ENCODE measurements at regions of chr15 and their contacts with region 1.

Region 1: DNA sequence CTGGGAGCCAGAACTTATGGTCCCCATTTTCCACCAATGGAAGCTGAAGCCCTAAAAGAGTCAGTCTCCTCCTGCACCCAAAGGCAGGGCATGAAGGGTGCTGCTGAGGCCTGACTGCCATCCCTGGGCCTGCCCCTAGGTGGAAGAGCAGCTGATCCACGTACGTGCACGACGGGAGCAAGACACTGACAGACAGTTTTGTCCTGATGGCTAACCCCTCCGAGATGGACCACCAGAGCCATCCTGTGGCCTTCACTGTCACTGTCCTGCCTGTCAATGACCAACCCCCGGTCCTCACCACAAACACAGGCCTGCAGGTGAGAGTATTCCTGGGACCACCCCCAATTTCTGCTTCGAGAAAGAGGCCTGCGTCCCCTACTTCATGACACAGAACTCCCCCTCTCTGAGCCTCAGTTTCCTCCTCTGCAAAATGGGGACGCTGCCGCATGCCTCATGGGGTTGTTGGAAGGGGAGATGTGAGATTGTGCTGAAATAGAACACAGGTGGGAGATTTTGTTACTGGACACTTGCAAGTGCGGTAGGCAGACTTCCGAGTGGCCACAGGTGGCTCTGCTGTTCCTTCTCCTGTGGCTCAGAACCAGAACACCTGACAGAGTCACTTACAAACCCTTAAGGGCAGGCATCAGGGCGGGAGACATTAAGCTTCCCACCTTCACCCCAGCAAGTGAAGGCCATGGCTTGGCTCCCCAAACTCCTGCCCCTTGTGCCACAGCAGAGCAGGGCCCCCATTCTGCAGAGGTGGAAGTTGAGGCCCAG is 175.3 kb downstream of the TBC1D2B start:
- DNase-seq: no peak
- ATAC-seq: peak; percentile 63
- H3K4me3 ChIP-seq: no peak overlapping the region
- H3K27ac ChIP-seq: no peak overlapping the region
- H3K4me1 ChIP-seq: no peaks in the 10 kb centered on the region
- H3K27me3 ChIP-seq: no peaks in the 10 kb centered on the region
- CTCF ChIP-seq: peak; percentile 15 to 42 (median 16); a peak in 2 of 6 replicates
- EP300 ChIP-seq: no peak
- POLR2A ChIP-seq: no peak
- RAD21 ChIP-seq: no peak

Region 2: DNA sequence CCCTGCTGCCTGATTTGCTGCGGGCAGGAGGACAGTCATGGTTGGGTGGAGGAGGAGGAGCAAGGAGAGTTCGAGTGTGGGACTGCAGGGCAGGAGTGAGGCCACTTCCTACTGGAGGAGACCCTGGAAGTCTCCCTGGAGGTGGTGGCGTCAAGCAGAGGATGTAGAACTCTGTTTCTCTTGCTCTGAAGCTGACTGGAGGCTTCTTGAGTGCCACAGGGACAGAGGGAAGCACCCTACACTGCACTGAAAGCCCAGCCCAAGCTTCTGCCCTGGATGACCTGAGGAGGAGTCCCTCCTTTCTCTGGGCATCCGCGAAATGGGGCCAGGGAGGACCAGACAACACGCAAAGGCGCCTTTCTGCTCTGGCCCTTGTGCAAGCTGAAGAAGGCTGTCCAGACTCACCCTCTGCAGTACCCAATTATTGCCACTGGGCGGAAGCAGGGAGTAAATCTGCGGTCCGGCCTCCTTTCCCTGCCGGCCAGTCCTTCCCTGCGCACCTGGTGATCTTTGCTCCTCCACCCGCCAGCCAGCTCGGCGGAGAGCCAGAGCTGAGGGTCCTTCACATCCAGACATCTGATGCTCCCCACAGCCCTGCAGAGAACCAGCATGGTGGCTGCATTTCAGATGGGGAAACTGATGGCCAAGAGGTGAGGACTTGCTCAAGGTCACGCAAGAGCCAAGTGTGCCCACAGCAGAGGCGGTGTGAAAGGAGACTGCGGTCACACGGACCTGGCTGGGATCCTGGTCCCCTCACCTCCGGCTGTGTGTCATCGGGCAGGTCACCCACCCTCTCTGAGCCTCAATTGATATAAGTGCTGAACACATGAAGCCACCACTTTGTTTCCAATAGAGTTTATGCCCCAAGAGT is 31.7 kb before region 1 on chr15:
- CTCF ChIA-PET with region 1: interaction called, 37 read pairs
- POLR2A ChIA-PET with region 1: no interaction called
- RAD21 ChIA-PET with region 1: interaction called, 19 read pairs
- SMC1A ChIA-PET with region 1: interaction called, 19 read pairs
- in situ Hi-C with region 1: no loop called
- intact Hi-C with region 1: no loop called
- DNase-seq: no peak
- ATAC-seq: peak; percentile 88
- H3K4me3 ChIP-seq: no peak overlapping the region
- H3K27ac ChIP-seq: no peak overlapping the region
- H3K4me1 ChIP-seq: no peaks in the 10 kb centered on the region
- H3K27me3 ChIP-seq: no peaks in the 10 kb centered on the region; a peak in 1 of 4 replicates
- CTCF ChIP-seq: peak; percentile 76 to 86 (median 78)
- EP300 ChIP-seq: no peak
- POLR2A ChIP-seq: no peak
- RAD21 ChIP-seq: peak; percentile 47

Measured in GM12878 (cell line).